Activated CD4-positive, alpha-beta T cell treated with anti-CD3 and anti-CD28 coated beads for 36 hours (primary cell): ENCODE measurements at regions of chr4 and their contacts with region 1.

Region 1: DNA sequence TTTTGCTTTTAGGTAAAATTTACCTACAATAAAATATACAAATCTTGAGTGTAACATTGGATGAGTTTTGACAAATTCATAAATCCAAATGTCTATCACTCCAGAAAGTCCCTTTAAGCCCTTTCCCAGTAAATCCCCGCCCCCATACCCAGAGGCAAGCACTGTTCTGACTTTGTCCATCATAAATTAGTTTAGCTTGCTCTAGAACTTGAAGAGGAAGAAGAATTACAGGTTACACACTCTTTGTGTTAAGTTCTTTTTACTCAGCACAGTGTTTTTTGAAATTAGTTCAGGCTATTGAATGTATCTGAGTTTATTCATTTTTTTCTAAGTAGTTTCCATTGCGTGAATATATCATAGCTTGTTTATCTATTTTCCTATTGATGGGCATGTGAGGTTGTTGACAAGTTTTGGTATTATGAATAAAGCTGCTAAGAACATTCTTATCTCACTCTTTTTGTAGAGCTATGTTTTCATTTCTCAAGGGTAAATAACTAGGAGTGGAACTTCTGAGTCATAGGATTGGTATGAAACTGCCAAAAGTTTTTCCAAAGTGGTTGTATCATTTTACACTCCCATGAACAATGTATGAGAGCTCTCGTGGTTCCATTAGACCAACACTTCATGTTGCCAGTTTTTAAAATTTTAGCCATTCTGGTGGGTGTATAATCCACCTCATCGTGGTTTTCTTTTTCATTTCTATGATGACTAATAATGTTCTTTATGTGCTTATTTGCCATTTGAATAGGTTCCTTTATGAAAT is 22.4 kb upstream of the HPSE start:
- DNase-seq: peak; percentile 52
- ATAC-seq: peak; percentile 91
- H3K4me3 Mint-ChIP-seq: no peak overlapping the region
- H3K27ac Mint-ChIP-seq: peak overlapping the region; percentile 72
- H3K4me1 Mint-ChIP-seq: peaks cover 23% of the 10 kb centered on the region
- H3K27me3 Mint-ChIP-seq: no peaks in the 10 kb centered on the region

Region 2: DNA sequence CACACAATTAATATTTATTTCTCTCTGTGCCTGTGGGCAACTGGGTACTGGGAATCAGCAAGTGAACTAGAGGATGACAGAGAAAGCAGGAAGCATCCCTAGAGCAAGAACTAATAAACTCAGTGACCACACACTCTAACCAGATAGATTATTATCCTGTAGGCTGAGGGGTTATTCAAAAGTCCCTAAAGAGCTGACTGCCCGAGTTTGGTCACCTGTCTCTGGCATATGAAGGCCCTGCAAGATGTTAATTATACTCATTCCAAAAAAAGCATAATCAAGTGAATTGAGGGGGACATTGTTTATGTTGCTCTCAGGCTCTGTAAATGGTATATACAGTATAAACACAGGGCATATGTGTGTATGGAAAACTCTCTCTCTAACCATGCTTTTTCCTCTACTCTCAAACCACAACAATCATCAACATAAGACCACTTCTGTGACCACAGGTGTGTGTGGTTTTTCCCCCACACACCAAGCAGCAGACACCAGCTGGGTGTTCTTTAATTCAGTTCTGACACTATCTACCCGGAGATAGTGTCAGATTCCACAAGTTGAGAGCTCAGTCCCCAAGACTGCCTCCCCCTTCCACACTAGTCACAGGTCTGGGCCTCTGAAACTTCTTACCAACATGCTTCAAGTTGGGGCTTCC is 16.3 kb before region 1 on chr4:
- CTCF ChIA-PET with region 1: interaction called, 5 read pairs
- POLR2A ChIA-PET with region 1: interaction called, 5 read pairs
- intact Hi-C with region 1: loop called (anchors 1 kb)
- DNase-seq: peak; percentile 63
- ATAC-seq: peak; percentile 94
- H3K4me3 Mint-ChIP-seq: peak overlapping the region; percentile 29
- H3K27ac Mint-ChIP-seq: peak overlapping the region; percentile 21
- H3K4me1 Mint-ChIP-seq: peaks cover 18% of the 10 kb centered on the region
- H3K27me3 Mint-ChIP-seq: peaks cover 7% of the 10 kb centered on the region

Region 3: DNA sequence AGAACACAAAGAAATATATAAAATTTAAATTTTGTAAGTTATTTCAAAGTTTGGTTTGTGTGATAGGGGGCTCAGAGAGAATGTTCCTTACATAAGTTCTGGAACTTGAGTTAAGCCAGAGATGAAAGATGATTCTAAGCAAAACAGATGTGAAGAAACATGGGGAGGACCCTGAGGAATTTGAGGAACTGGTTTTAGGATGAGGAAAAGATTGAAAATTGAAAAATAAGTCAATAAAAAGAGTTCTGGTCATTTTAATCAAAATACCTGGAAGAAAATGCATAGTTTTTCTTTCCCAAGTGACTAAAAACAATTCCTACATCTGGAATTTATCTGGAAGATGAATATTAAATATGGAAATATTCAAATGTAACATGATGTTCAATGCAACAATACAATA is 61.1 kb after region 1 on chr4:
- CTCF ChIA-PET with region 1: no interaction called
- POLR2A ChIA-PET with region 1: no interaction called
- intact Hi-C with region 1: no loop called
- DNase-seq: no peak
- ATAC-seq: no peak
- H3K4me3 Mint-ChIP-seq: no peak overlapping the region
- H3K27ac Mint-ChIP-seq: no peak overlapping the region
- H3K4me1 Mint-ChIP-seq: no peaks in the 10 kb centered on the region
- H3K27me3 Mint-ChIP-seq: no peaks in the 10 kb centered on the region